ENCODE measurements at regions of chr1 and their contacts with region 1.

Region 1: DNA sequence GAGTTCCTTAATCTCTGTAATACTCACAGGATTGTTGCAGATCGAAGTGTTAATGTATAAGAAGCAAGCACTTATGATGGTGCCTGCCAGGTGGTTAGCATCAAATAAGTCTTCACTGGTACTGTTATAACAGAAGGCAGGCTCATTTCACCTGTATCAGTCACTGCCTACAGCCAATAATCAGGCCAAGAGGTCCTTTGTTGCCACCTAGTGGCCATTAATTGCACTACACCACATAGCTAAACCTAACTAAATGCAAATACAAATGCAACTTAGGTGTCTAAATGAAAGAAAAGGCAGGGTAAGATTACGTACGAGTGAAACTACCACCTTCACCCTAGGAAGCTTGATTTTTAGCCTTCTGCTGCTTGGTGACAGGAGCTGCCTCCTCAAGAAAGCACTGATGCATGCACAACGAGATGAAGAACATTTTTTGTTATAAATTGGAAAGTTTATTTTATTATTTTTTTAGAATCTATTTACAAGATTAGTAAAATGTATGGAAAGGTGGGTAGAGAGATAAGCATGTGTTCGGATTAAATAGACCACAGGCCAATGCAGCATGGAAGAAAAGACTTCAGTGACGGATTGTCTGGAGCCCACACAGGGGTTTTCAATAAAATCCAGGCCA is 334.8 kb upstream of the CAMK1G start:
- DNase-seq: peak; percentile 91
- H3K4me3 Mint-ChIP-seq: no peak overlapping the region
- H3K27ac Mint-ChIP-seq: no peak overlapping the region
- H3K4me1 Mint-ChIP-seq: peaks cover 5% of the 10 kb centered on the region
- H3K27me3 Mint-ChIP-seq: no peaks in the 10 kb centered on the region
- CTCF ChIP-seq: peak; percentile 99

Region 2: DNA sequence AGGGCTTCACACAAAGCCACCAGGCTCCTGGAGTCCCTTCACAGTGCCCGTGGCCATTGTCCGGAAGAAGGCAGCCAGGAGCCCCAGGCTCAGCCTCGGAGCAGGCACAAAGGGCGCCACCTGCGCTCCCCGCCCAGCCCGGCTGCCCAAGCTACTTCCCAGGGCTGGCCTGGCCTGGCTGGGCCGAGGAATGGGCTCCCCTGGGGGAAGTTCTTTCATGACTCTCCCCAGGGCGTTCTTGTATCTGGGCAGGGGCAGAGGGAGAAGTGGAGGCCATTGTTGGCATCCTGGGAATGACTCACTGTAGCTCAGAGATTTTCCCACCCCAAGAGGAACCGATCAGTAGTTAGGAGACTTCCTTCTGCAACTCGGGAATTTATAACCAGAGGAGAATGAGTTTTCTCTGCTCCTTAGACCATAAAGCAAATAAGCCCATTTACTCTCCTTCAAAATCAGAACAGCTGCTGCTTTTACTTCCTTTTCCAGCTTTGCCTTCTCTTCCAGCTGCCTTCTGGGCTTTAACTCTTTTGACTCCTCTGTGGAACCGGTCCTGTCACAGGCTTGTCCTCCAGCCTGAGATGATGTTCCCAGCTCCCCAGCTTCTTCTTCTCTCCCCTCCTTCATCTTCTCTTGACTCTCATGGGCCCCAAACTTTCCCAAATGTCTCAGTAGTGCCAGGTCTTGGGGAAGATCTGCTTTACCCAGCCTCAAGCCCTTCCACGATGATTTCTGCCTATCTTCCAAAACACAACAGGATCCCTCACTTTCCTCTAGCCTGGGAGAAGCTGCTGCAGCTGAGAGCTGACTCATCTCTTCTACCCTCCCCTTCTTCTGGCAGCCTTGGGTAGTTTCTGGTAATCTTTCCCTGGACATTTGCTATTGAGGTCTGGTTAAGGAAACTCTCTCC is 1219.1 kb before region 1 on chr1:
- CTCF ChIA-PET with region 1: interaction called, 3 read pairs
- POLR2A ChIA-PET with region 1: no interaction called
- intact Hi-C with region 1: loop called (anchors 10 kb)
- DNase-seq: peak; percentile 26
- H3K4me3 Mint-ChIP-seq: no peak overlapping the region
- H3K27ac Mint-ChIP-seq: peak overlapping the region; percentile 21
- H3K4me1 Mint-ChIP-seq: no peaks in the 10 kb centered on the region
- H3K27me3 Mint-ChIP-seq: no peaks in the 10 kb centered on the region
- CTCF ChIP-seq: no peak

Region 3: GRCh38 chr1:209219791-209220524 is 28.8 kb before region 1 on chr1:
- CTCF ChIA-PET with region 1: interaction called, 29 read pairs
- POLR2A ChIA-PET with region 1: no interaction called
- intact Hi-C with region 1: no loop called
- DNase-seq: no peak
- H3K4me3 Mint-ChIP-seq: no peak overlapping the region
- H3K27ac Mint-ChIP-seq: no peak overlapping the region
- H3K4me1 Mint-ChIP-seq: no peaks in the 10 kb centered on the region
- H3K27me3 Mint-ChIP-seq: no peaks in the 10 kb centered on the region
- CTCF ChIP-seq: no peak

Region 4: GRCh38 chr1:209302779-209303568 is 54.2 kb after region 1 on chr1:
- CTCF ChIA-PET with region 1: interaction called, 25 read pairs
- POLR2A ChIA-PET with region 1: interaction called, 3 read pairs
- intact Hi-C with region 1: no loop called
- DNase-seq: peak; percentile 14
- H3K4me3 Mint-ChIP-seq: no peak overlapping the region
- H3K27ac Mint-ChIP-seq: no peak overlapping the region
- H3K4me1 Mint-ChIP-seq: no peaks in the 10 kb centered on the region
- H3K27me3 Mint-ChIP-seq: peaks cover 50% of the 10 kb centered on the region
- CTCF ChIP-seq: no peak

Region 5: DNA sequence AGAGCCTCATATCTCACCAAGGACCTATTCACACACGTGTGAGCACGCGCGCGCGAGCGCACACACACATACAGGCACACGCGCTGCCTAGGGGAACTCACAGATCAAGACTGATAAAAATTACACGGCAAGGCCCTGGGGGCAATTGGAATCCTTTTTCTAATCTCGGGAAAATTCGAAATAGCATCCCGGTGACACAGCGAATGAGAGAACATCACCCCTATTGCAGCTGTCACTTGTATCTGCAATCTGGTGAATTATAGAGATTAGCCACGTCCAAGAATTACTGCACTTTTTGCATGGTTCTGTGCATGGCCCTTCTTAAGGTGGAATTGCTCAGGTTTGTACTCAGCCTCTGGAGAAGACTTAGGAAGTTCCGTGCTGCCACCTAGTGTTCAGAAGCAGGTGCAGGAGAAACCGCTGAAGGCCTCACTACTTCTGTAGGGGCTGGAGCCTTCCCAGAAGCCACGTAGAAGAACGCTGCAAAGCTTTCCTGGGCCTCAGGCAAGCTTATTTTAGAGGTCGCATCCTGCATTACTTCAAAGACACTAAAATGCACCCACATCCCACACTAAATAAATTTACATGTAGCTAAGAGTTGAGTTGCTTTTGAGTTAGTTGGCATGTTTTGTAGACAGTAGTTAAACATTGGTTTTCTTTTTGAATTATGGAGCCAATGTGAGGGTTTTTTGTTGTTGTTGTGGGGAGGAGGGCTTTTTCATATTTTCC is 105.5 kb after region 1 on chr1:
- CTCF ChIA-PET with region 1: interaction called, 220 read pairs
- POLR2A ChIA-PET with region 1: interaction called, 20 read pairs
- intact Hi-C with region 1: loop called (anchors 1 kb)
- DNase-seq: peak; percentile 99
- H3K4me3 Mint-ChIP-seq: peak overlapping the region; percentile 7
- H3K27ac Mint-ChIP-seq: peak overlapping the region; percentile 78
- H3K4me1 Mint-ChIP-seq: peaks cover 41% of the 10 kb centered on the region
- H3K27me3 Mint-ChIP-seq: no peaks in the 10 kb centered on the region
- CTCF ChIP-seq: peak; percentile 98

Region 6: GRCh38 chr1:209398313-209398991 is 149.7 kb after region 1 on chr1:
- CTCF ChIA-PET with region 1: interaction called, 13 read pairs
- POLR2A ChIA-PET with region 1: interaction called, 3 read pairs
- intact Hi-C with region 1: no loop called
- DNase-seq: peak; percentile 100
- H3K4me3 Mint-ChIP-seq: peak overlapping the region; percentile 29
- H3K27ac Mint-ChIP-seq: peak overlapping the region; percentile 79
- H3K4me1 Mint-ChIP-seq: peaks cover 28% of the 10 kb centered on the region
- H3K27me3 Mint-ChIP-seq: no peaks in the 10 kb centered on the region
- CTCF ChIP-seq: no peak

Region 7: DNA sequence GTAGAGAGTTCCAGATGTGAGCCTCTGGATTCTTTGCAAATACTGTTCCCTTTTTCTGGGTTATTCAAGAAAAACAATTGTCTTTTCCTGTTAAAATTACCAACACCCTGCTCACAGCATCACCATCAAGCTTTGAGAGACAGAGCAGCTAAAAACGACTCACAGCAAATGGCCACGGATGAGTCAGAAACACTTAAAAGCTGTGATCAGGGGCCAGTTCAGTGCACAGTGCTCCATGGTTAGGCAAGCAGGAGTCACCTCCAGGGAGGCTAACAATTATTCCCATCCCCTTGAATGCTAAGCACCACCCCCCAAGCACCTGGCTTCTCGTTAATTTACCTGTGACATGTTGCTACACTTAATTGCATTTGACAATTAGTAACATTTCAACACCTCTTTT is 206.4 kb after region 1 on chr1:
- CTCF ChIA-PET with region 1: interaction called, 13 read pairs
- POLR2A ChIA-PET with region 1: no interaction called
- intact Hi-C with region 1: no loop called
- DNase-seq: peak; percentile 44
- H3K4me3 Mint-ChIP-seq: no peak overlapping the region
- H3K27ac Mint-ChIP-seq: no peak overlapping the region
- H3K4me1 Mint-ChIP-seq: peaks cover 32% of the 10 kb centered on the region
- H3K27me3 Mint-ChIP-seq: peaks cover 25% of the 10 kb centered on the region
- CTCF ChIP-seq: no peak

Measured in MCF 10A (cell line).